ENCODE measurements at regions of chr4 and their contacts with region 1.

Region 1: DNA sequence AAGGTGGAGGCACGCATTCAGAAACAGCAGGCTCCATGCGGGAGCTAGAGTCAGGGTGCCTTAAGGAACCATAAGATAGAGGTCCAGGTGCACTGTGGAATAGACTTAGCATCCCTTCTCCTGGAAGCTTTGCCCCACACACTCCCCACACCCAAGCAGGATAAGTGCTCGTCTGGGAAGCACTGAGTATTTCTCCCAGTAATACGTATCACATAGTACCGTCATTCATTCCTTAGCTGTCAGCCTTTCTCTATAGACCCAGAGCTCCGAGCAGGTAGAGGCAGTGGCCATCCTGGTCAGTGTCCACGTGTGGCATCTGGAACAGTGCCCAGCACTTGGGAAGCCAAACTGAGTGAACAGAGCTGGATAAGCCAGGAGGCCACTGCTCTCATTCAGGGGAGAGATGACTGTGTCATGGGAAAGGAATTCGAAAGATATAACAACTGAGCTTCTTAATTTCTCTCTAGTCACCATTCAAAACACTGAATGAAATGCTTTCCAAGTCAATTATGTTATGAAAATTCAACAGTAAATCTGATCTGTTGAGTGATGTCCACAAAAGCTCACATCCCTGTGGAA is 9.9 kb downstream of the APBB2 start:
- DNase-seq: peak; percentile 38 to 80 (median 79)
- ATAC-seq: peak; percentile 71 to 75
- H3K4me3 ChIP-seq: no peak overlapping the region
- H3K27ac ChIP-seq: peak overlapping the region; percentile 42
- H3K4me1 ChIP-seq: peaks cover 13% of the 10 kb centered on the region
- H3K27me3 ChIP-seq: no peaks in the 10 kb centered on the region

Region 2: DNA sequence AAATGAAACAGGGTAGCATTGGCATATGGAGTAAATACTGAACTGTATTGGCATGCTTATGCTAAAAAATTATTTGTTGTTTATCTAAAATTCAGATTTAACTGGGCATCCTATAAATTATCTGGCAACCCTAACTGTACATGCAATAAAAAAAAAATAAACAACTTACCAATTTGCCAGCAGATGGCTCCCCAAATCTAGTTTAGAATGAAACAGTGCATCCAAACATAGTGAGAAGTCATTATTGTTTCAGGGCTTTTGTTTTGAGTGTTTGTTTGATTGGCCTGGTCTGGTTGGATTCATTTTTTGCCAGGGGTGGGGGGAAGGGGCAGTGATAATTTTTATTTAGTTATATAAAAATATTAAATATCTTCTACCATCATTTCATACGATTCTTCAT is 467.6 kb before region 1 on chr4:
- intact Hi-C with region 1: no loop called
- DNase-seq: no peak
- ATAC-seq: no peak
- H3K4me3 ChIP-seq: no peak overlapping the region
- H3K27ac ChIP-seq: no peak overlapping the region
- H3K4me1 ChIP-seq: no peaks in the 10 kb centered on the region
- H3K27me3 ChIP-seq: no peaks in the 10 kb centered on the region

Region 3: DNA sequence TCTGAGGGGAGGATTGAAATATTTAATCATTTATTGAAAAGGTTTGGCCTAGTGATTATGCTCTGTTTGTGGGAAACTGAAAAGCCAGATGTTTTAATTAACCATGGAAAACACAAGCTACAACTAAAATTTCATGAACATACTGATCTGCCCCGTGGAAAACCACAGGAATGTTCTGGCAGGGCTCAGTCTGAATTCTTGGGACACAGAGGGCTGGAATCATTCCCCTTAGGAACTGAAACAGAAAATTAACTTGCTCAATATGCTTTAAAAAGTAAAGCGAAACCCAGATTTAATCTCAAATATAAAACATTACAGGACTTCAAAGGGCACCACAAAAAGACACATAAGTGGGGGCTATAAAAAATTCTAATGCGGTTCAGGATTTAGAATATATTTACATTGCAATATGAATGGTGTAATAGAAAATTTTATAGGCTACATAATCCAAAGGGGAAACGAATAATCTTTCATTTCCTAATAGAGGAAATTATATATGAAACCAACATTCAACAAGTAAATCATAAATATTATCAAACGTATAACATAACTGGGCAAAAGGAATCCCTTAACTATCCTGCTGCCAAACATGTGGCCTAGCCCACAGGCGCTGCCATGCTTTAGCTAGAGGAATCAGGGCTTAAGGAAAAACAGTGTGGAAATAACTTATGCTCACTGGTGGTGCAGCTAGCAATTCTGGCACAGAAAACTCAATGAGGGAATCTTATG is 61.0 kb before region 1 on chr4:
- intact Hi-C with region 1: loop called in 2 of 4 experiments (anchors 10 kb)
- DNase-seq: peak in 2 of 3 donors; percentile 44 to 64
- ATAC-seq: peak; percentile 83 to 88
- H3K4me3 ChIP-seq: no peak overlapping the region
- H3K27ac ChIP-seq: peak overlapping the region; percentile 87
- H3K4me1 ChIP-seq: peaks cover 11% of the 10 kb centered on the region
- H3K27me3 ChIP-seq: no peaks in the 10 kb centered on the region